ENCODE measurements at regions of chr1 and their contacts with region 1.

Region 1: DNA sequence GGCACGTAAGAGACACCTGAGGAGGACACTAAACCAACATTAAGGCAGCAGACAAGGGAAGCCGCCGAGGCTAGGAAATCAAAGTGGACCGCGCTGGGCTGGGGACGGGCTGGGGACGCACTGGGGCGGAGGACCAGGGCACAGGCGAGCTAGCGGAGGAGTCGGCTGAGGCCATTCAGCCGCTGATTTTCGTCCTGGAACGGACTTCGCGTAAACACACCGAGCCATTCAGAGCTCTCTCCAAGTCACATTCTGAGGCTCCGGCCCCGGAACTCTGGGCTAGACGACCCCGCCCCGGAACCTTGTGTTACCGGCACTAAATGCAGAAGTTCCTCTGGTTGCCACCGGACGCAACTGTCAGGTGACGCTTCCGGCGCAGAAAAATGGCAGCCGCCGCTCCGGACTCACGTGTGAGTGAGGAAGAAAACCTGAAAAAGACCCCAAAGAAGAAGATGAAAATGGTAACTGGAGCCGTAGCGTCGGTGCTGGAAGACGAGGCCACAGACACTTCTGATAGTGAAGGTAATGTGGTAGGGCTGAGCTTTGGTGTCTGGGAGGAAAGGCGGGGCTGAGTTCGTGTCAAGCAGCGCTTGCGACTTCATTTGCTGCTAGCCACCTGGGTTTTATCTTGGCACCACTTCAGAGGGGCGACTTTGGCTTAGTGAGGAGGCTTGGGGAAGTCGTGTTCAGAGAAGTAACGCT is at the start of gene RRP15:
- DNase-seq: peak; percentile 70 to 92 (median 86)
- ATAC-seq: peak; percentile 95
- H3K4me3 ChIP-seq: peak within 1 kb of the TSS; percentile 71 to 89
- H3K4me3 Mint-ChIP-seq: peak within 1 kb of the TSS; percentile 99
- H3K27ac ChIP-seq: peak within 1 kb of the TSS; percentile 68 to 80
- H3K27ac Mint-ChIP-seq: peak within 1 kb of the TSS; percentile 97
- H3K4me1 ChIP-seq: peaks cover 23% of the 10 kb centered on the region
- H3K4me1 Mint-ChIP-seq: peaks cover 43% of the 10 kb centered on the region
- H3K27me3 ChIP-seq: no peaks in the 10 kb centered on the region
- H3K27me3 Mint-ChIP-seq: peaks cover 20% of the 10 kb centered on the region
- CTCF ChIP-seq: no peak
- total RNA-seq, gene RRP15: 16.1 to 16.7 TPM

Region 2: DNA sequence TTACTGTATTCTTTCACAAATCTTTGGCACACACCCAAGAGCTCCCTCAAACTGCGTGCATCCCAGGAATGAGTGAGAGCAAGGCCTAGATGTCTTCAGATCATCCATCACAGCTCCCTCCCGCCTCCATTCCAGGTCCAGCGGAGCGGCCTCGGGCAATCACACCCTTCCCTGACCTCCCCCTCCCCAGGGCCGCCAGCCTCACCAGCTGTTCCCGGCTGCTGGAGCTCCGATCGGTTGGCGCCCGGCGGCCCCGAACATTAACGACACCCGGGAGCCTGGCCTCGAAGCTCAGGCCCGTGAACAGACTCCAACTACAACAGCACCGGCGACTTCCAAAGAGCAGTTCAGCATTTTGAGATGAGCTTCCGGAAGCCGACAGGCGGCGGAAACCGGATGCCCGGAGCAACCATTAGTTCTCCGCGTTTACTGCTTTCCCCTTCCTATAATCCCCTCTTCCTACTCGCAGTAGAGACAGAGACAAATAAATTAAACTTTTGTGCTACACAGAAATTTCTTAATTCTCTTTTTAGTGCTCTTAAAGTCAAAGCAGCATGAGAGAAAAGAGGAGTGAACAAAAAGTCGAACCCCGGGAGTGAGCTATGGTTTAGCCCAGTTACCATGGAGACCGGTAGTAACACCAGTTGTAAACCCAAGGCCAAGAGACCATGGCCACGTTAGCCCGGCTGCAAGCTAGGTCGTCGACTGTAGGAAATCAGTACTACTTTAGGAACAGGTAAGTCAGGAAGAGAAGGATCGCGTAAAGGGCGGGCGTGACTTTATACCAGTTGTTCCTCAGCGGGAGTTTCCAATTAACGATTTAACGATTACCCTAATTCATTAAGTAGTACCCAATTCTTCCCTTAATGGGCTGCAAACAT is 654.1 kb before region 1 on chr1 and contains the starts of genes GPATCH2 and SPATA17:
- CTCF ChIA-PET with region 1: no interaction called
- POLR2A ChIA-PET with region 1: interaction called, 7 read pairs
- intact Hi-C with region 1: loop called (anchors 1 to 2 kb)
- DNase-seq: peak; percentile 51 to 94 (median 77)
- ATAC-seq: peak; percentile 89
- H3K4me3 ChIP-seq: peak within 1 kb of the TSS; percentile 76 to 89
- H3K4me3 Mint-ChIP-seq: peak within 1 kb of the TSS; percentile 98
- H3K27ac ChIP-seq: peak within 1 kb of the TSS; percentile 91 to 99
- H3K27ac Mint-ChIP-seq: peak within 1 kb of the TSS; percentile 99
- H3K4me1 ChIP-seq: peaks cover 21% of the 10 kb centered on the region
- H3K4me1 Mint-ChIP-seq: peaks cover 45% of the 10 kb centered on the region
- H3K27me3 ChIP-seq: no peaks in the 10 kb centered on the region
- H3K27me3 Mint-ChIP-seq: peaks cover 13% of the 10 kb centered on the region
- CTCF ChIP-seq: no peak
- total RNA-seq, gene GPATCH2: 7.2 to 7.6 TPM
- total RNA-seq, gene SPATA17: not detected

Region 3: GRCh38 chr1:218557731-218558130 is 272.6 kb after region 1 on chr1:
- CTCF ChIA-PET with region 1: no interaction called
- POLR2A ChIA-PET with region 1: no interaction called
- intact Hi-C with region 1: no loop called
- DNase-seq: no peak
- ATAC-seq: no peak
- H3K4me3 ChIP-seq: no peak overlapping the region
- H3K4me3 Mint-ChIP-seq: no peak overlapping the region
- H3K27ac ChIP-seq: no peak overlapping the region
- H3K27ac Mint-ChIP-seq: no peak overlapping the region
- H3K4me1 ChIP-seq: no peaks in the 10 kb centered on the region
- H3K4me1 Mint-ChIP-seq: no peaks in the 10 kb centered on the region
- H3K27me3 ChIP-seq: no peaks in the 10 kb centered on the region
- H3K27me3 Mint-ChIP-seq: peaks cover 6% of the 10 kb centered on the region
- CTCF ChIP-seq: no peak

Region 4: GRCh38 chr1:220046052-220046930 is 1761.2 kb after region 1 on chr1 and contains the start of gene EPRS1:
- CTCF ChIA-PET with region 1: no interaction called
- POLR2A ChIA-PET with region 1: no interaction called
- intact Hi-C with region 1: loop called in 1 of 2 experiments (anchors 5 kb)
- DNase-seq: peak; percentile 88 to 99 (median 93)
- ATAC-seq: peak; percentile 98
- H3K4me3 ChIP-seq: peak within 1 kb of the TSS; percentile 89 to 98
- H3K4me3 Mint-ChIP-seq: peak within 1 kb of the TSS; percentile 95
- H3K27ac ChIP-seq: peak within 1 kb of the TSS; percentile 81 to 84
- H3K27ac Mint-ChIP-seq: peak within 1 kb of the TSS; percentile 94
- H3K4me1 ChIP-seq: peaks cover 27% of the 10 kb centered on the region
- H3K4me1 Mint-ChIP-seq: peaks cover 39% of the 10 kb centered on the region
- H3K27me3 ChIP-seq: no peaks in the 10 kb centered on the region
- H3K27me3 Mint-ChIP-seq: no peaks in the 10 kb centered on the region
- CTCF ChIP-seq: peak; percentile 52
- total RNA-seq, gene EPRS1: 42.8 to 44.2 TPM

Region 5: GRCh38 chr1:220272047-220272840 is 1987.2 kb after region 1 on chr1 and contains the start of gene RAB3GAP2:
- CTCF ChIA-PET with region 1: no interaction called
- POLR2A ChIA-PET with region 1: no interaction called
- intact Hi-C with region 1: loop called (anchors 2 to 10 kb)
- DNase-seq: peak; percentile 95 to 98 (median 97)
- ATAC-seq: peak; percentile 91
- H3K4me3 ChIP-seq: peak within 1 kb of the TSS; percentile 94 to 98
- H3K4me3 Mint-ChIP-seq: no peak within 1 kb of the TSS
- H3K27ac ChIP-seq: peak within 1 kb of the TSS; percentile 94 to 95
- H3K27ac Mint-ChIP-seq: no peak within 1 kb of the TSS
- H3K4me1 ChIP-seq: peaks cover 29% of the 10 kb centered on the region
- H3K4me1 Mint-ChIP-seq: peaks cover 16% of the 10 kb centered on the region
- H3K27me3 ChIP-seq: no peaks in the 10 kb centered on the region
- H3K27me3 Mint-ChIP-seq: peaks cover 2% of the 10 kb centered on the region
- CTCF ChIP-seq: no peak
- total RNA-seq, gene RAB3GAP2: 34.3 to 34.6 TPM